ENCODE measurements at regions of chr17 and their contacts with region 1.

Region 1: DNA sequence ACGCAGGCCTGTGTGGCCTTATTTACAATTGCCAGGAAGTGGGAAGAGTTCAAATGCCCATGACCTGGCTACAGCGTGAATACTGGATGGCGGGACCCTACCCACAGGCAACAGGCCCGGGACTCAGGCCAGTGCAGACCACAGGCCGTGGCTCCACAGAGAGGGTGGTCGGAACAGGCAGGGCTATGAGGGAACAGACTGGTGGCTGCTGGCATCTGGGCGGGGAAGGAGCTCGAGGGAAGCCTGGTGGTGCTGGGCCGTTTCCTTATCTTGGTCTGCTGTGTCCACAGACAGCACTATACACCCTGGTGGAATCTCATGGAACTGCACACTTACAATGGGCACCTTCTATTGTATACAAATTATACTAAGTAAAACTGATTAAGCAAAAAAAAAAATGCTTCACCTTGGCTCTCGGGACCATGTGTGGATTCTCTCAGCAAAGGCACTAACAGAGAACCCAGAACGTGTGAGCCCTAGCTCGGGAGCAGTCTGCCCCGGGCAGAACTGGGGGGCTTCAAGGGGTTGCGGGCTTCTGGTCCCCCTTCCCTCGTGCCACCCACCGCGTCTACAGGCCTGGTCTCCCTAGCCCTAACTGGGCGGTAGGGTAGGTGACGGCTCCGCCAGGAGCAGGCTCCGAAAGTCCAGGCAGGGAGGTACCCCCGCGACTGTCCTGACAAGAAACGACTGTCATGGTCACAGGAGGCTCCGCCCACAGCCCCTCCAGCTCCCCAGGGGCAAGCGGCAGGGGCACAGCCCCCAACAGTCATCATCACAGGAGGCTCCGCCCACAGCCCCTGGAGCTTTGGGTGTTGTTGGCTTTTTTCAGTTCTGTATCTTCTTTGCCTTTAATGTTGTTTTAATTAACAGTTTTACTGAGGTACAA is 21.8 kb downstream of the CEP131 start:
- DNase-seq: no peak
- H3K4me3 ChIP-seq: no peak overlapping the region
- H3K27ac ChIP-seq: no peak overlapping the region
- H3K4me1 ChIP-seq: no peaks in the 10 kb centered on the region; a peak in 1 of 7 replicates
- H3K27me3 ChIP-seq: no peaks in the 10 kb centered on the region
- CTCF ChIP-seq: peak in 2 of 3 experiments; percentile 40 to 53; a peak in 3 of 4 replicates
- EP300 ChIP-seq: no peak
- POLR2A ChIP-seq: no peak
- RAD21 ChIP-seq: peak; percentile 24 to 30; a peak in 2 of 4 replicates

Region 2: DNA sequence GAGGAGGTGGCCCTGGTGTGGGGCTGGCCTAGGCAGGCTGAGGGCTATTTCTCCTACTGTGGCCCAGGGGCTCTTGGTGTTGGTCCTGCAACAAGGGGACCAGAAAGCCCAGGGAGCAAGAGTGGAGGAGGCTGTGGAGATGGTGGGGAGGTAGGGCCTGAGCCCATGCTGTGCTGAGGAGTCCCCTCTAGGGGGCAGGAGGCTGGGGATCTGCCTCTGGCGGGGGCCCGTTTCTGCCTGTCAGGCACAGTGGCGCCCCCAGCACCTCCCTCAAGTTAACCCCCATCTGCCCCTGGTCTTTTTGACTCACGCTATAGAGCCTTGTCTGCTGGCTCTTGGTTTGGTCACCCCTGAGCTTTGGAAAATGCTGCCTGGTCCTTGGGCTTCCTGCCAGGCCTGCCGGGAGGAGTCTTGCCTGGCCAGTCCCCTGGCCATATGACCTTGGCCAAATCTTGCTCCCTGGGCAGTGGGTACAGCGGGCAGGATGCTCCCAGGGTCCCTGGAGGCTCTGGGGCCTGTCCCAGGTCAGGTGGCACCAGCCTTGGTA is 160.1 kb before region 1 on chr17:
- CTCF ChIA-PET with region 1: no interaction called
- POLR2A ChIA-PET with region 1: no interaction called
- DNase-seq: peak in 1 of 2 experiments; percentile 78
- H3K4me3 ChIP-seq: no peak overlapping the region
- H3K27ac ChIP-seq: no peak overlapping the region
- H3K4me1 ChIP-seq: peaks cover 0 to 17% (median 6%) of the 10 kb centered on the region in 4 experiments; a peak in 6 of 7 replicates
- H3K27me3 ChIP-seq: peaks cover 0 to 6% (median 0%) of the 10 kb centered on the region in 4 experiments; a peak in 3 of 7 replicates
- CTCF ChIP-seq: peak; percentile 73 to 91 (median 75)
- EP300 ChIP-seq: no peak
- POLR2A ChIP-seq: no peak
- RAD21 ChIP-seq: peak; percentile 42 to 44; a peak in 2 of 4 replicates

Region 3: DNA sequence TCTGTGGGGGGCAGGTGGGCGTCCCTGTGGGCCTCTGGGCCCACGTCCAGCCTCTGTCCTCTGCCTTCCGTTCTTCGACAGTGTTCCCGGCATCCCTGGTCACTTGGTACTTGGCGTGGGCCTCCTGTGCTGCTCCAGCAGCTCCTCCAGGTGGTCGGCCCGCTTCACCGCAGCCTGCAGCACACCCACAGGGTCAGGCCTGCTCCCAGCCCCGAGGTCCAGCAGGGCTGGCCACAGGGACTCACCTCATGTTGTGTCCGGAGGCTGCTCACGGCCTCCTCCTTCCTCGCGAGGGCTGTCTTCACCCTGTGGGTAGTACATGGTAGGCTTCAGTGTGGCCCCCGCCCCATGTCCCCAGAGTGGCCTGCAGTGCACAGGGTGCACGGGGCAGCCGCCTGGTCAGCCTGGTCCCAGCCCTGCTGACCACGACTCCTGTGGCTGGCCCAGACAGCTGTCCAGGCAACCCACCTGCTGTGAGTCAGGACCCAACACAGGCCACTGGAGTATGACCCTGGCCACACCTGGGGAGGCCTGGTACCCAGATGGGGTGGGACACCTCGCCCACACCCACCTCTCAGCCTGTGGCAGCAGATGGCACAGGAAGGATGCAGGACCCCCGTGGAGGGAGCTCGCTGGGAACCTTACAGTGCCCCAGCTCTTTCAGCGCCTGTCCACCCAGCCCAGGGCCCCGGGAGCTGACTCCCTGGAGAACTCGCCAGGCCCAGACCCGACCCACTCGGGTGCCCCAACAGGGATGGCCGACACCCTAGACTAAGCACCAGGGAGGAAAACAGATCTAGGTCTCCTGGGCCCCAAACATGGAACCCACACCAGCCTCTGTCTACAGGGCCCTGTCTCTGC is 11.0 kb before region 1 on chr17:
- CTCF ChIA-PET with region 1: interaction called, 25 read pairs
- POLR2A ChIA-PET with region 1: interaction called, 3 read pairs
- DNase-seq: no peak
- H3K4me3 ChIP-seq: no peak overlapping the region
- H3K27ac ChIP-seq: no peak overlapping the region
- H3K4me1 ChIP-seq: no peaks in the 10 kb centered on the region
- H3K27me3 ChIP-seq: no peaks in the 10 kb centered on the region
- CTCF ChIP-seq: peak; percentile 62 to 69 (median 64)
- EP300 ChIP-seq: no peak
- POLR2A ChIP-seq: no peak
- RAD21 ChIP-seq: peak; percentile 64 to 75

Region 4: DNA sequence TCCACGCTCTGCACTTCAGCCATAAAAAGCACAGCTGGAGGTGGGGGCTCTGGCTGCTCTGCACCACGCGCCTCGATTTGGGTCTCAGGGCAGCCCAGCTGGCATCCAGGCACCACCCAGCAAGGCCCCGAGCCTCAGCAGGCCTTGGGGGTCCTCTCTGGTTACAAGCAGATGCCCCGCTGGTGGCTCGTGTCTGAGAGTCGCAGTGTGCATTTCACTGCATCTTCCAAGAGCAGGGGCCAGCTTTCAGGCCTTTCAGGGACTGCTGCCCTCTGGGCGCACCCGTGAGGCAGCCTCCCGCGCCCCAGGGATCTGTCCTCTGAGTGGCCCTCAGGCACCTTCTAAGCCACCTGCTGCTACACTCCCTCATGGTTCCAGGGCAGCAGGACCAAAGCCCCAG is 63.7 kb after region 1 on chr17:
- CTCF ChIA-PET with region 1: no interaction called
- POLR2A ChIA-PET with region 1: no interaction called
- DNase-seq: no peak
- H3K4me3 ChIP-seq: no peak overlapping the region
- H3K27ac ChIP-seq: no peak overlapping the region
- H3K4me1 ChIP-seq: no peaks in the 10 kb centered on the region
- H3K27me3 ChIP-seq: no peaks in the 10 kb centered on the region
- CTCF ChIP-seq: no peak
- EP300 ChIP-seq: no peak
- POLR2A ChIP-seq: no peak
- RAD21 ChIP-seq: no peak

Measured in H1 (cell line).